Heart right ventricle (tissue), 16 donors: ENCODE measurements at regions of chr19 and their contacts with region 1.

Region 1: GRCh38 chr19:40576585-40577451 is at the start of gene SHKBP1:
- DNase-seq: peak; percentile 96
- ATAC-seq: peak; percentile 97 to 99 (median 99)
- H3K4me3 ChIP-seq: peak within 1 kb of the TSS; percentile 23 to 85 (median 74)
- H3K27ac ChIP-seq: peak within 1 kb of the TSS in 9 of 10 donors; percentile 62 to 93 (median 85)
- H3K4me1 ChIP-seq: peaks cover 0 to 38% (median 13%) of the 10 kb centered on the region in 9 donors
- H3K27me3 ChIP-seq: no peaks in the 10 kb centered on the region
- CTCF ChIP-seq: no peak
- total RNA-seq, gene SHKBP1: 12.0 to 31.5 (median 15.9) TPM

Region 2: GRCh38 chr19:40542202-40542859 is 34.5 kb before region 1 on chr19:
- intact Hi-C with region 1: loop called in 1 of 10 experiments (anchors 5 kb)
- DNase-seq: peak; percentile 76 to 86
- ATAC-seq: peak; percentile 77 to 92 (median 86)
- H3K4me3 ChIP-seq: no peak overlapping the region
- H3K27ac ChIP-seq: peak overlapping the region in 1 of 10 donors; percentile 40
- H3K4me1 ChIP-seq: peaks cover 0 to 22% (median 0%) of the 10 kb centered on the region in 9 donors
- H3K27me3 ChIP-seq: peaks cover 0 to 4% (median 0%) of the 10 kb centered on the region in 7 donors
- CTCF ChIP-seq: peak in 2 of 9 donors; percentile 6 to 18

Region 3: DNA sequence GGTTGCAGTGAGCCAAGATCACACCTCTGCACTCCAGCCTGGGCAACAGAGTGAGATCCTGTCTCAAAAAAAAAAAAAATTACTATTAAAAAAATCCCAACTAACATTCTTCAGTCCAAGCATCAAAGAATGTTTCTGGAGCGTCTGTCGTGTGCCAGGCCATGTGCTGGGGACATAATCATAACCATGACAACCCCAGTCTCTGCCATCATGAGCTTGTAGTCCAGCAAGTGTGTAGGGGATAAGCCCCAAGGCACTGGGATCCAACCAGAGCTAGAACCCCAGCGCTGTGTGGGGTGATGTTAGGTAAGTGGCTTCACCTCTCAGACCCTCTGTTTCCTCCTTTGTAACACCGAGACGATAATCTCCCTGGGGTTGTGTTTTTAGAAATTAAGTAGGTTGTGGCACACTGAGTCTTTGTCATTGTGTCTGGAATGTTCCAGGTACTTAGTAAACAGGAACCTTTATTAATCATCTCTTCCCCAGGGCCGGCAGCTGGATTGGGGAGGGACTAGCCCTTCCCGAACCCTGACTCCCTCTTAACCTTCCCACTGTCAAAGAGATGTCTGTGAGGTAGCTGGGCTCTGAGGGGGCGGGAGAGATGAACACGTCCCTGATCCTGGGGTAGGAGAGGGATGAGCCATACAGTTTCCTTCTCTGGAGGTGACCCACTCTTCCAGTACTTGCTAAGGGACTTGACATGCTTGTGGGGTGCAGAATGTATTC is 145.3 kb after region 1 on chr19:
- intact Hi-C with region 1: no loop called
- DNase-seq: no peak
- ATAC-seq: peak in 1 of 8 donors; percentile 4
- H3K4me3 ChIP-seq: peak overlapping the region in 2 of 10 donors; percentile 0 to 81
- H3K27ac ChIP-seq: peak overlapping the region in 8 of 10 donors; percentile 87 to 98 (median 96)
- H3K4me1 ChIP-seq: peaks cover 16 to 61% (median 52%) of the 10 kb centered on the region in 9 donors
- H3K27me3 ChIP-seq: no peaks in the 10 kb centered on the region
- CTCF ChIP-seq: no peak